ENCODE measurements at regions of chr1 and their contacts with region 1.

Region 1: DNA sequence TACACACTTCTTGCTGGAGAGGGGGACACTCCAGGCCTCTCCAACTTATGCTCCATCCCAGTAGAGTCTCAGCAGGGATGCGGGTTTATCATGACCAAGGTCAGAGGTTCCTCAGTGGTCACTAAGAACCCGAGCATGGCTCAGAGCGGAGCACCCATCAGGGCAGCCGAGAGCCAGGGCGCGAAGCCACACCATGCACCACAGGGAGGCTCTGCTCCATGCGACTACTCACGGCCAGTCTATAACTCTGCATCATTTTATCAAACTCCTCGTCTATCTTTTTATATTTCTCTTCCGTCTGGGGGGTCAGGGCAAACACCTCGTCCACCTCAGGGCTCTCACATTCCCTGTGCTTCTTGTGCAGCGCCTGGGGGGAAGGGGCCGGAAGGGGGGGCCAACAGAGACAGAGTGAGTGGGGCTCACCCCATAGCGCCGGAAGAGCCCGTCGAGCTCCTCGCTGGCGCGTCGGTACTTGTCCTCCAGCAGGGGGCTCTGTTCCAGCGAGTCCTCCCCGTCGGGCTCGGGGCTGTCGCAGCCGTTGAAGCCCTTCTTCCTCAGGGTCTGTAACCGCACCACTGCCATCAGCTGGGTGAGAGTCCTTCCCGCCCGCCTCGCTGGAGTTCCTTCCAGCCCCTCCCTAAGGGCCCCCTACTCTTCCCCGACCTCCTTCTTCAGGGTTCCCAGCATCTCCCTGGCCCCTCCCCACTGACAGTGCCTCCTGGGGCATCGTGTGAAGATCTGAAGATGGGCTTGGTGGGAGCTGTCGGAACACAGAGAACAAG is 20.0 kb downstream of the MEF2D start:
- DNase-seq: peak; percentile 69 to 83 (median 82)
- H3K4me3 ChIP-seq: no peak overlapping the region
- H3K27ac ChIP-seq: no peak overlapping the region
- H3K4me1 ChIP-seq: peaks cover 0 to 18% (median 10%) of the 10 kb centered on the region in 4 experiments
- H3K27me3 ChIP-seq: no peaks in the 10 kb centered on the region

Region 2: GRCh38 chr1:156090822-156091188 is 389.8 kb before region 1 on chr1:
- CTCF ChIA-PET with region 1: no interaction called
- POLR2A ChIA-PET with region 1: no interaction called
- DNase-seq: peak; percentile 79 to 88 (median 81)
- H3K4me3 ChIP-seq: no peak overlapping the region
- H3K27ac ChIP-seq: no peak overlapping the region
- H3K4me1 ChIP-seq: peaks cover 0 to 17% (median 11%) of the 10 kb centered on the region in 4 experiments
- H3K27me3 ChIP-seq: peaks cover 0 to 5% (median 0%) of the 10 kb centered on the region in 5 experiments

Region 3: DNA sequence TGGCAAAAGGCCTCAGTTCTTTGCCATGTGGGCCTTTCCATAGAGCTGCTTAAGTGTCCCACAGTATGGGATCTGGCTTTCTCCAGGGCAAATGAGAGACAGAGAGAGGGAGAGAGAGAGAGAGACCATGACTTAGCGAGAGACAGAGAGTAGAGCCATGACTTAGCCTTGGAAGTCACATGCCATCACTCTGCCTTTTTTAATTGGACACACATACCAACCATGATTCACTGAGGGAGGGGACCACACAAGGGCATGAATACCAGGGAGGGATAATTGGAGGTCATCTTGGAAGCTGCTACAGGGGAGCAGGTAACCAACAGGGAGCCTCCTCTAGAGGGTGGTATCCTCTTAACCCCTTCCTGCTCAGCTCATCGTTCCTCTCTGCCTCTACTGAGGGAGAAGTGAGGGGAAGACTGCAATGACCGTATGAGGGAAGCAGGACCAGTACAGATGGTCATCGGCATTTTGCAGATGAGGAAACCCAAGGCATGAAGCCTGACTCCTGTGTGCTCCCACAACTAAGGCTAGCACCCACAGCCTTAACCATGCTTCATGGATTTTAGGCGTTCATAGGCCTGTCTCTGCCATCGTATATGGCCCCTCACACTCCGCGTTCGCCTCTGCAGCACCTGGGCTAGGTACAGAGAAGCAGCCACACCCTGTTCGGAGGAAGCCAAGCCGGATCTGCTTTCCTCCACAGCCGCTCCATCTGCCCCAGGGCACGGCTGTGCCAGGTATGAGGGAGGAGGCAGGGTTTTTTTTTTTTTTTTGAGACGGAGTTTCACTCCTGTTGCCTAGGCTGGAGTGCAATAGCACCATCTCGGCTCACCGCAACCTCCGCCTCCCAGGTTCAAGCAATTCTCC is 18.6 kb before region 1 on chr1:
- CTCF ChIA-PET with region 1: interaction called, 14 read pairs
- POLR2A ChIA-PET with region 1: interaction called, 5 read pairs
- DNase-seq: no peak
- H3K4me3 ChIP-seq: no peak overlapping the region
- H3K27ac ChIP-seq: no peak overlapping the region
- H3K4me1 ChIP-seq: peaks cover 2 to 9% (median 6%) of the 10 kb centered on the region in 4 experiments
- H3K27me3 ChIP-seq: no peaks in the 10 kb centered on the region

Region 4: DNA sequence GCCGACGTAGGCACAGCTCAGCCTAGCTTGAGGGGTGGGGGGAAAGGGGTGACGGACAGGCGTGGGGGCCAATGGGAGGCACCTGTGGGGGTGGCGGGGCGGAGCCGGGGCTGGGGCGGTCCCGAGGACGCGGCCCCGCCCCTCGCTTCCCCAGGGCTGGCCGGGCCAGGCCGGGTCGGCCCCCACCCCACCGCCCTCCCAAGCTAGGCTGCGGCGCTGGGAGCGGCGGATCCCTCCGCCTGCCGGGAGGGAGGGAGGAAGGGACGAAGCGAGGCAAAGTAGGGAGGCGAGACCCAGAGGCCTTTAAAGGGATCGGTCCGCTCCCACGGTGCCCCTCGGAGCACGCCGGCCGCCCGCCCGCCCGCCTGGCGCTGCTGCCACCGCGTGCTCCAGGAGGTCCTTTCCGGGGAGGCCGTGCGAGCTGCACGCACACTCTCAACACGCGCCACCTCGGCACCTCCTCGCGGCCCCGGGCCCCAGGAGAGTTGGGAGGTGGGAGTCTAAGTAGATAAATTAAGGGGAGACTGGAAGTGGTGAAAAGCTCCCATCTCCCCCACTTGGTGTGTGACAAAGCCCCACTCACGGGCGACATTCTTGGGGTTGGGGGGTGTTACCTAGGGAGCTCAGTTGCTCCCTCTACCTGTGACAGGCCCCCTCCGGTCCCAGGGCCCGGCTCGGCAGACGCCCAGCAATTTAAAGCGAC is 20.3 kb after region 1 on chr1:
- CTCF ChIA-PET with region 1: interaction called, 114 read pairs
- POLR2A ChIA-PET with region 1: interaction called, 6 read pairs
- DNase-seq: peak; percentile 94 to 97 (median 97)
- H3K4me3 ChIP-seq: peak overlapping the region; percentile 77 to 97 (median 90)
- H3K27ac ChIP-seq: peak overlapping the region; percentile 95 to 97
- H3K4me1 ChIP-seq: peaks cover 28 to 82% (median 77%) of the 10 kb centered on the region in 4 experiments
- H3K27me3 ChIP-seq: no peaks in the 10 kb centered on the region

Region 5: DNA sequence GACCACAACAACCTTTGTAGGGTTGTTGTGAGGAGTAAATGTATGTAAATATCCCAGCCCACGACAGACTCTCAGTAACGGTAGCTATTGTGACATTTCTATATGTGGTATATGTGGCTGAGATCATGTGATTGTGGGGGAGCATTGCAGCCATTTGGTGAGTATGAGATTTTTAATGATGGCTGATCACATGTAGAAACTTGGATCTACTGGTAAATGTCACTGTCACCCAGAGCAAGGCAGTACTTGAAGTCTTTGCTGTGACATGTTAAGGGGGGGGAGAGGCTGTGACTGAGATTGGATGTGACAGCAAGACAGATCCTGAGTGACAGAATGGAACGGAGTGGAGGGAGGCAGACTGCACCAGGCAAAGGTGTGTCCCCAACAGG is 43.9 kb after region 1 on chr1:
- CTCF ChIA-PET with region 1: interaction called, 27 read pairs
- POLR2A ChIA-PET with region 1: no interaction called
- DNase-seq: peak; percentile 50 to 83 (median 78)
- H3K4me3 ChIP-seq: peak overlapping the region in 3 of 7 experiments; percentile 47 to 62 (median 49)
- H3K27ac ChIP-seq: peak overlapping the region in 1 of 2 experiments; percentile 73
- H3K4me1 ChIP-seq: peaks cover 18 to 47% (median 27%) of the 10 kb centered on the region in 4 experiments
- H3K27me3 ChIP-seq: no peaks in the 10 kb centered on the region

Region 6: GRCh38 chr1:156549385-156549784 is 68.8 kb after region 1 on chr1:
- CTCF ChIA-PET with region 1: interaction called, 17 read pairs
- POLR2A ChIA-PET with region 1: interaction called, 4 read pairs
- DNase-seq: peak; percentile 19 to 45 (median 42)
- H3K4me3 ChIP-seq: no peak overlapping the region
- H3K27ac ChIP-seq: no peak overlapping the region
- H3K4me1 ChIP-seq: peaks cover 0 to 19% (median 5%) of the 10 kb centered on the region in 4 experiments
- H3K27me3 ChIP-seq: no peaks in the 10 kb centered on the region

Region 7: GRCh38 chr1:156571949-156572662 is 91.5 kb after region 1 on chr1 and contains the start of gene IQGAP3:
- CTCF ChIA-PET with region 1: interaction called, 10 read pairs
- POLR2A ChIA-PET with region 1: no interaction called
- DNase-seq: peak; percentile 77 to 91 (median 87)
- H3K4me3 ChIP-seq: peak within 1 kb of the TSS; percentile 37 to 88 (median 71)
- H3K27ac ChIP-seq: no peak within 1 kb of the TSS
- H3K4me1 ChIP-seq: peaks cover 11 to 23% (median 22%) of the 10 kb centered on the region in 4 experiments
- H3K27me3 ChIP-seq: no peaks in the 10 kb centered on the region

Region 8: DNA sequence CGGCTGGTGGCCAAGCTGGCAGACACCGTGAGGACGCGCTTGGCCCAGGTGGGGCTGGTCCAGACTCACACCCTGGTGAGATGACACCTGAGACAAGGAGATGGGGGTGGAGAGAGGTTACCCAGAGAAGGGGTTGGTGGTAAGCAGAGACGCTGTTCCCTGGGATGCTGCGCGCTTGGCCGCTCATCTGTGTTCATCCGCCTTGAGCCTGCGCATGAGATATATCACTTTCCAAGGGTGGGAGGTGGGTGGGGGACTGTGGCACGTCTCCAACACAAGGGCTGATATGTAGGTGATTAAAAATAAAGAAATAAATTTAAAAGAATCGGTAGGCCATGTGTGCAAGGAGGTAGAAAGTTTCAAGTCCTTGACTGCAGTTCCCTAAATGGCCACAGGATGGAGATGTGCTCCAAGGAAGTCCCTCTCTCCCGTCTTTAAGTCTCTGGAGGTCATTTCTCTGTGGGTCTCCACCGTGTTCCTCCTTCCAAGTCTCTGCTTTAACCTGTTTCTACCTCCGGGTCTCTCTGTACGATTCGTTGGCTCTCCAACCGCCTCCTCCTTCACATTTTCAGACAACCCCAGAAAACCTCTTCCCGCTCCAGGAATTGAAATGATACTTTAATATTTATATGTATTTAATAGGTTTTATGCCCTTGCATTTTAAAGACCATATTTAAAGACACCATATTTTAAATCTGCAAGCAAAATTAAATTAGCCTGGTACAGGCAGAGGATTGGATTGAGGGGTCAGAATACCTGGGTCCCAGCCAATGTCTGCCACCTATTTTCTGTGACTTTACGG is 103.4 kb after region 1 on chr1:
- CTCF ChIA-PET with region 1: interaction called, 13 read pairs
- POLR2A ChIA-PET with region 1: no interaction called
- DNase-seq: peak; percentile 87 to 93 (median 87)
- H3K4me3 ChIP-seq: peak overlapping the region in 1 of 7 experiments; percentile 75
- H3K27ac ChIP-seq: peak overlapping the region in 1 of 2 experiments; percentile 85
- H3K4me1 ChIP-seq: peaks cover 0 to 48% (median 33%) of the 10 kb centered on the region in 4 experiments
- H3K27me3 ChIP-seq: no peaks in the 10 kb centered on the region